ENCODE measurements at regions of chr17 and their contacts with region 1.

Region 1: DNA sequence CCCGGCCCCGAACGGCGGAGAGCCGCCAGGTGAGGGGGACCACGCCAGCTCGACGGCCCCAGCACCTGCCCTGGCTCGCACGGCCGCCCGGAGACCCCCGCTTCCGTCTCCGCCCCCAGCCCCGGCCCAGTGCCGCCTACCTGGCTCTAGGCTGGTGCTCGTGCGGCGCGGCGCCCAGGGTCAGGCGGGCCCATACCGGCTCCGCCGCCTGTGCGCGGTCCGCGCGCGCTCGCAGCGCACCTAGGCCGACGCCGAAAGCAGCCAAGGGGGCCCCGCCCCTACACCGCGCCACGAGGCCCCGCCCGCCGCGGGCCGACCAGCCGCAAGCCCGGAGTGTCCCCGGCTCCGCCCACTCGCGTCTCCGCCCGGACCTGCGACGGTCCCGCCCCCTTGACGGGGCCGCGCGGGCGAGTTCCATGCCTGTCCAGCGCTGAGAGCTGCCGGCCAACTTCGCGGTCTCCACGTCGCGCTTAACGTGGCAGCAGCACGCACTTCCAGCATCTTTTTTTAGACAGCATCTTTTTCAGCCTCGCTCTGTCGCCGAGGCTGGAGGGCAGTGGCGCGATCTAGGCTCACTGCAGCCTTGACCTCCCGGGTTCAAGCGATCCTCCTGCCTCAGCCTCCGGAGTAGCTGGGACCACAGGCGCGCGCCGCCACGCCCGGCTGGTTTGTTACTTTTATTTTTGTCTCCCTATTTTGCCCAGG is at the start of gene SLC25A39:
- DNase-seq: peak; percentile 99
- H3K4me3 Mint-ChIP-seq: peak within 1 kb of the TSS; percentile 94
- H3K27ac Mint-ChIP-seq: peak within 1 kb of the TSS; percentile 96
- H3K4me1 Mint-ChIP-seq: peaks cover 20% of the 10 kb centered on the region
- H3K27me3 Mint-ChIP-seq: no peaks in the 10 kb centered on the region
- total RNA-seq, gene SLC25A39: 172 TPM in 2 replicates

Region 2: GRCh38 chr17:44218344-44219107 is 106.2 kb before region 1 on chr17:
- intact Hi-C with region 1: loop called (anchors 1 kb)
- DNase-seq: peak; percentile 96
- H3K4me3 Mint-ChIP-seq: peak overlapping the region; percentile 97
- H3K27ac Mint-ChIP-seq: peak overlapping the region; percentile 97
- H3K4me1 Mint-ChIP-seq: peaks cover 52% of the 10 kb centered on the region
- H3K27me3 Mint-ChIP-seq: peaks cover 2% of the 10 kb centered on the region

Region 3: GRCh38 chr17:44266402-44267164 is 58.1 kb before region 1 on chr17:
- intact Hi-C with region 1: no loop called
- DNase-seq: no peak
- H3K4me3 Mint-ChIP-seq: no peak overlapping the region
- H3K27ac Mint-ChIP-seq: no peak overlapping the region
- H3K4me1 Mint-ChIP-seq: no peaks in the 10 kb centered on the region
- H3K27me3 Mint-ChIP-seq: no peaks in the 10 kb centered on the region

Region 4: GRCh38 chr17:44308320-44308818 is 16.4 kb before region 1 on chr17 and contains the start of gene RUNDC3A:
- intact Hi-C with region 1: loop called (anchors 2 kb)
- DNase-seq: peak; percentile 95
- H3K4me3 Mint-ChIP-seq: peak within 1 kb of the TSS; percentile 43
- H3K27ac Mint-ChIP-seq: no peak within 1 kb of the TSS
- H3K4me1 Mint-ChIP-seq: peaks cover 3% of the 10 kb centered on the region
- H3K27me3 Mint-ChIP-seq: peaks cover 37% of the 10 kb centered on the region
- total RNA-seq, gene RUNDC3A: 0.42 TPM in 1 of 2 replicates, not detected in the other

Measured in activated CD4-positive, alpha-beta T cell treated with anti-CD3 and anti-CD28 coated beads, Interleukin-2, amount 10 ng/mL, durations not matched to agents 24 days and 14 days (primary cell).